ENCODE measurements at regions of chr9 and their contacts with region 1.

Region 1: GRCh38 chr9:35910613-35911359 is 1.5 kb downstream of the SPAAR start:
- DNase-seq: peak; percentile 45
- H3K4me3 Mint-ChIP-seq: peak overlapping the region; percentile 60
- H3K27ac Mint-ChIP-seq: peak overlapping the region; percentile 88
- H3K4me1 Mint-ChIP-seq: peaks cover 38% of the 10 kb centered on the region
- H3K27me3 Mint-ChIP-seq: no peaks in the 10 kb centered on the region

Region 2: GRCh38 chr9:35923927-35924763 is 13.4 kb after region 1 on chr9:
- intact Hi-C with region 1: loop called (anchors 2 kb)
- DNase-seq: no peak
- H3K4me3 Mint-ChIP-seq: no peak overlapping the region
- H3K27ac Mint-ChIP-seq: no peak overlapping the region
- H3K4me1 Mint-ChIP-seq: peaks cover 10% of the 10 kb centered on the region
- H3K27me3 Mint-ChIP-seq: peaks cover 21% of the 10 kb centered on the region

Region 3: GRCh38 chr9:35932735-35933134 is 21.9 kb after region 1 on chr9:
- intact Hi-C with region 1: loop called (anchors 1 kb)
- DNase-seq: no peak
- H3K4me3 Mint-ChIP-seq: no peak overlapping the region
- H3K27ac Mint-ChIP-seq: no peak overlapping the region
- H3K4me1 Mint-ChIP-seq: peaks cover 19% of the 10 kb centered on the region
- H3K27me3 Mint-ChIP-seq: peaks cover 17% of the 10 kb centered on the region

Region 4: DNA sequence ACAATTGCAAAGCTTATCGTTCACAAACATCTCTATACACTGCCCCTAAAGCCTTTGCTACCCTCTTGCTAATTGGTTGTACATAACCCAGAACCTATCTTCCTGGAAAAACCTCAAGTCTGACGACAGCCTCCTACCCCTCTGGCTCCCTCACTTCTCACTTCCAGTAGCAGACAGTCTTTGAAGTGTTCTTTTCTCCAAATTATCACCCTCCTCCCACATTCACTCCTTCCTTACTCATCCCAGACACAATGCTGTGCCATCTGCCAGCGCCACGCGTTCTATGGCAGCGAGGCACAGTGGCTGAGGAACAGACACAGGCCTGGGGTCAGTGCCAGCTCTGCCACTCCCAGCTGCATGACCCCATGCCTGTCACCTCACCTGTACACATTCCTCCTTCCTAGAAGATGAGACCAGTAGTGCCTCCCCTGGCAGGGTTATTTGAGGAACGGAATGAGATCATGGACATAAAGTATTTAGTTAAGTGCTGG is 307.7 kb after region 1 on chr9:
- intact Hi-C with region 1: no loop called
- DNase-seq: peak; percentile 20
- H3K4me3 Mint-ChIP-seq: peak overlapping the region; percentile 41
- H3K27ac Mint-ChIP-seq: peak overlapping the region; percentile 87
- H3K4me1 Mint-ChIP-seq: peaks cover 34% of the 10 kb centered on the region
- H3K27me3 Mint-ChIP-seq: no peaks in the 10 kb centered on the region